ENCODE measurements at regions of chr12 and their contacts with region 1.

Region 1: DNA sequence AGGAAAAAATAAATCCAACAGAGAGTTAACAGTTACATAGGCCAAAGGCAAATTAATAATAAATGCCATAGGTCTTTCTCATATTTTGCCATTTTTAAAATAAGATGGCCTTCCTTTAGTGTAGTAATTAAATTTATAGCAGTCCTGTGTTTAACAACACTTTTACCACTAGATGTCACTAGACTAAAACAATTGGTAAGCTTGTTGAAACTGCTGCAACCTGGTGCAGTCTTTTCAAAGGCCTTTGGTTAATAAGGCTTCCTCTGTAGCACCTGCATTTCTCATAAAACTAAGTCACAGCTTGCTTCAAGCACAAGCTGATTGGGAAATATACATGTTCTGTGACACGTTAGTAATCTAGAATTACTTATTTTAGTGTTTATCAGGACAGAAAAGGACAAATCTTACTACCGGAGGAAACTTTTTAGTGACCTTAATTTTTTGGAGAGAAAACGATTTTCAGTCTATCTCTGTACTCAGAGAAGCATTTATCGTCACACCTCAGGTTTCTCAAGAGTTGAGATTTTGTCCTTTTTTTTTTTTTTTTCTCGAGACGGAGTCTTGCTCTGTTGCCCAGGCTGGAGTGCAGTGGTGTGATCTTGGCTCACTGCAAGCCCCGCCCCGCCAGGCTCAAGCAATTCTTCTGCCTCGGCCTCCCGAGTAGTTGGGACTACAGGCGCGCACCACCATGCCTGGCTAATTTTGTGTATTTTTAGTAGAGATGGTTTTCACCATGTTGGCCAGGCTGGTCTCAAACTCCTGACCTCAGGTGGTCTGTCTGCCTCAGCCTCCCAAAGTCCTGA is 20.0 kb downstream of the BORCS5 start:
- DNase-seq: no peak
- H3K4me3 ChIP-seq: no peak overlapping the region
- H3K27ac ChIP-seq: no peak overlapping the region
- H3K4me1 ChIP-seq: peaks cover 0 to 4% of the 10 kb centered on the region in 2 donors
- H3K27me3 ChIP-seq: no peaks in the 10 kb centered on the region
- CTCF ChIP-seq: peak; percentile 60 to 72 (median 66)

Region 2: DNA sequence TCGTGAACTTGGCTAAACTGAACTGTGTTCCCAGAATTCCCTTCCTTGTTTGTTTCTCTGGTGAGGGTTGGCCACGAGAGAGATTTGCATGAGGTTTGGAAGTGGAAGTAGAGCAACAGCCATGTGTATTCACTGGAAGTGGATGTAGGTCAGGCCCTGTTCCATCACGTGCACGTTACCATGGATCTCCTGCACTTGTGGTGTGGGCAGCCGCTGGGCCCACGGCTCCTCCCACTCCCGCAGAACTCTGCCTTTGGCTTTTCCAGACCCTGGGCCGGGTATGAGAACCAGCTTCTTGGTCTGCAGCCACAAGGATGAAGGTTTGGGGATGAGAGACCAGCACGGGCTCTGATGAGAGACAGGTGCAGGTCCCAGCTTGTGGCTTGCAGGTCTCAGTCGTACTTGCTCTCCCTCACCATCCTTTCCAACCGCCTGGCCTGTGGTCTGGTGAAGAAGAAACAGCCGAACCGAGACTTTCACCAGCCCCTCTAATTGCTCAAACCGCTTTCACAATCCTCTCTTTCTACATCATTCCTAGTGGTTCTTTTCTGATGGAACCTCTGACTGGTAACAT is 90.9 kb after region 1 on chr12:
- intact Hi-C with region 1: no loop called
- DNase-seq: no peak
- H3K4me3 ChIP-seq: no peak overlapping the region
- H3K27ac ChIP-seq: no peak overlapping the region
- H3K4me1 ChIP-seq: no peaks in the 10 kb centered on the region
- H3K27me3 ChIP-seq: no peaks in the 10 kb centered on the region
- CTCF ChIP-seq: no peak

Region 3: DNA sequence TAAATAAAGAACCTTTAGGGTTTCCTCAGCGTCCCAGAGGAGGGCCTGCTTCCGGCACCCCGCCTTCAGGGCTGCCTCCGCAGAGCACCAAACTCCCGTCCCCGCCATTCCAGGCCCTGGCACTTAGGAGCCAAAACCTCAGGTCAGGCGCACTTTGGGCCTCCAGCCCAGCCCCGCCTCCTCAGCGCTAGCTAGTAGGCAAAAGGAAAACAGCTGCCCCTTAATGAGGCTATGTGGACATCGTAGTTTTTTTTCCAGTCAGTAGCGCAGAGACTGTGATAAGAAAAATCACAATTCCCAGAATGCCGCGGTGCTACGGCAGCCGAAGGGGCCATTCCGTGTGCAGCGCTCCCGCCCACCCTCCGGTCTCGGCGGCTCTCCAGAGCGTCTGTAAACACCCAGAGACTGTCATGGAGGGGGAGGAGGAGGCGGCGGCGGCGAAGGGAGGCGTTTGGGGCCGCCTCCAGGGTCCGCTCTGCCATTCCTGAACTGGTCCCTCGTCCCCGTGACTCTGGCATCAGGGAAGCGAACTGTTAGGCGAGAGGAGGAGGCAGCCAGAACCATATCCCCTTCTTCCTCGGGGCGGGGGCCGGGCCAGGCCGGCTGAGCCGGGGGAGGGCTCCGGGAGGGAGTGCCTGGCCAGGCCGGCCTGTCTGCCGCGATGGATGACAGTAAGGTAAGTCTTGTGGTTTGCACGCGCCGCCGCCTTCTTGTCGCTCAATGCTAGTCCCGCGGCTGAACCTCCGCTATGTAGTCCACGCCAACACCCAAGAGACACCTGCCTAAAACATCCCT is 234.9 kb after region 1 on chr12 and contains the start of gene CREBL2:
- intact Hi-C with region 1: loop called (anchors 5 kb)
- DNase-seq: peak; percentile 83 to 97
- H3K4me3 ChIP-seq: peak within 1 kb of the TSS; percentile 76 to 83
- H3K27ac ChIP-seq: peak within 1 kb of the TSS; percentile 91 to 94
- H3K4me1 ChIP-seq: peaks cover 3 to 16% of the 10 kb centered on the region in 2 donors
- H3K27me3 ChIP-seq: no peaks in the 10 kb centered on the region
- CTCF ChIP-seq: no peak
- total RNA-seq, gene CREBL2: 19.4 TPM

Region 4: GRCh38 chr12:12661086-12661485 is 284.2 kb after region 1 on chr12:
- intact Hi-C with region 1: loop called (anchors 2 kb)
- DNase-seq: no peak
- H3K4me3 ChIP-seq: peak overlapping the region; percentile 13 to 26
- H3K27ac ChIP-seq: peak overlapping the region in 1 of 2 donors; percentile 17
- H3K4me1 ChIP-seq: peaks cover 5 to 20% of the 10 kb centered on the region in 2 donors
- H3K27me3 ChIP-seq: no peaks in the 10 kb centered on the region
- CTCF ChIP-seq: no peak

Region 5: DNA sequence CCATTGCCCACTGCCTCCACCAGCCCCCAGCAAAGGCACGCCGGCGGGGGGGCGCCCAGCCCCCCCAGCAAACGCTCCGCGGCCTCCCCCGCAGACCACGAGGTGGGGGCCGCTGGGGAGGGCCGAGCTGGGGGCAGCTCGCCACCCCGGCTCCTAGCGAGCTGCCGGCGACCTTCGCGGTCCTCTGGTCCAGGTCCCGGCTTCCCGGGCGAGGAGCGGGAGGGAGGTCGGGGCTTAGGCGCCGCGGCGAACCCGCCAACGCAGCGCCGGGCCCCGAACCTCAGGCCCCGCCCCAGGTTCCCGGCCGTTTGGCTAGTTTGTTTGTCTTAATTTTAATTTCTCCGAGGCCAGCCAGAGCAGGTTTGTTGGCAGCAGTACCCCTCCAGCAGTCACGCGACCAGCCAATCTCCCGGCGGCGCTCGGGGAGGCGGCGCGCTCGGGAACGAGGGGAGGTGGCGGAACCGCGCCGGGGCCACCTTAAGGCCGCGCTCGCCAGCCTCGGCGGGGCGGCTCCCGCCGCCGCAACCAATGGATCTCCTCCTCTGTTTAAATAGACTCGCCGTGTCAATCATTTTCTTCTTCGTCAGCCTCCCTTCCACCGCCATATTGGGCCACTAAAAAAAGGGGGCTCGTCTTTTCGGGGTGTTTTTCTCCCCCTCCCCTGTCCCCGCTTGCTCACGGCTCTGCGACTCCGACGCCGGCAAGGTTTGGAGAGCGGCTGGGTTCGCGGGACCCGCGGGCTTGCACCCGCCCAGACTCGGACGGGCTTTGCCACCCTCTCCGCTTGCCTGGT is 340.1 kb after region 1 on chr12 and contains the start of gene CDKN1B:
- intact Hi-C with region 1: loop called (anchors 5 kb)
- DNase-seq: peak; percentile 76 to 96
- H3K4me3 ChIP-seq: peak within 1 kb of the TSS; percentile 75 to 88
- H3K27ac ChIP-seq: peak within 1 kb of the TSS; percentile 96 to 99
- H3K4me1 ChIP-seq: peaks cover 3 to 34% of the 10 kb centered on the region in 2 donors
- H3K27me3 ChIP-seq: no peaks in the 10 kb centered on the region
- CTCF ChIP-seq: no peak
- total RNA-seq, gene CDKN1B: 65.1 TPM